ENCODE measurements at regions of chrX and their contacts with region 1.

Region 1: DNA sequence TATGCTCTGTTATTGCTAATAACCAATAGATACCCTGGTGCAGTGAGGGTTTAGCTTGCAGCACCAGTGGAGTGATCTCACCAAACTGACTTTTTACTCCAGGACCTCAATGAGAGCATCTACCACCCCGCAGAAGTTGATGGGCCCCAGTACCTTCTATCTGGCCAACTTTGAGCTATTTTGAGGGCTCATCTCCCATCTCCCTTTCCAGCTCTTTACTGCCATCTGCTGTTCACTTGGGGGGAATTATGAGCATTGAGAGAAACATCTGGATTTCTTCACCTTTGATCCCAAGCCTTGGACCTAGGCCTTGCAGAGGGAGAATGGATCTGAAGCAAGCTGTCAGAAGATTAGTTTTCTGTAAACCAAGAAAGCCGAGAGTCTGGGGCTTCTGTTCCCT is 143.6 kb downstream of the TMEM164 start:
- DNase-seq: peak; percentile 75

Region 2: DNA sequence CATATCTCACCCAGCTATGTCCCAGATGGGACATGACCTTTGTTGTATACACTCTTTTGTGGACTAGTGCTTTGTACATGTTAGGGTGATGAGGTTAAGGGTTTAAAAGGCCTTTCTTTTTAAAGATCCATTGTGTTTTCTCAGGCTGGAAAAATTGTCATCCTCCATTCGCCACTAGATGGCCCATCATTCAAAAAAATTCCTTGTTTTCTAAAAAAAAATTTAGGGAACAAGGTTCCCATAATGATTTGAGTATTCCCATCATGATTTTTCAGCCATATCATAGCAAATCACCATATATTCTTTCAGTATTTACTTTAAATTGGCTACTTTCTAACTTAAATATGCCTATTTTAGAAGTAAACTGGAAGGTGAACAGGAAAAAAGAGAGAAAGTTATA is 235.5 kb before region 1 on chrX:
- CTCF ChIA-PET with region 1: interaction called, 25 read pairs
- POLR2A ChIA-PET with region 1: no interaction called
- DNase-seq: no peak

Region 3: GRCh38 chrX:110133735-110134370 is 12.7 kb before region 1 on chrX:
- CTCF ChIA-PET with region 1: interaction called, 15 read pairs
- POLR2A ChIA-PET with region 1: no interaction called
- DNase-seq: no peak

Region 4: GRCh38 chrX:110226931-110227330 is 80.4 kb after region 1 on chrX:
- CTCF ChIA-PET with region 1: no interaction called
- POLR2A ChIA-PET with region 1: no interaction called
- DNase-seq: no peak

Region 5: DNA sequence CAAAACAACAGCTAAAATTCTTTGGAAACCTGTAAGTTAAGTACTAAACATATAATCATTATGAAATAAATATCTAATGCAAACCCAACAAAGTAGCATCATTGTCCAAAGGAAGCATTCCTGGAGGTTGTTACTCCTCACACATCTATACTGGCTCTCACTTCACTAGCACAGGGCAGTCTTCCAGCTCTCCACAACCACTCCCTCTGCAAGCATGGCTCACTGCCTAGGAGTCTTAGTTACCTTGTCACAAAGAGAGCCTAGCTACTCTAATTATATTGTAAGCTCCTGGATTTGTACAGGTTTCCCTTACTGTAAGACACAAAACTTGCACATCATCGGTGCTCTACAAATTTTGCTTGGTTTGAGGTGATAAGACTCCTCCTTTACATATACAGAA is 95.3 kb after region 1 on chrX:
- CTCF ChIA-PET with region 1: no interaction called
- POLR2A ChIA-PET with region 1: no interaction called
- DNase-seq: no peak

Region 6: DNA sequence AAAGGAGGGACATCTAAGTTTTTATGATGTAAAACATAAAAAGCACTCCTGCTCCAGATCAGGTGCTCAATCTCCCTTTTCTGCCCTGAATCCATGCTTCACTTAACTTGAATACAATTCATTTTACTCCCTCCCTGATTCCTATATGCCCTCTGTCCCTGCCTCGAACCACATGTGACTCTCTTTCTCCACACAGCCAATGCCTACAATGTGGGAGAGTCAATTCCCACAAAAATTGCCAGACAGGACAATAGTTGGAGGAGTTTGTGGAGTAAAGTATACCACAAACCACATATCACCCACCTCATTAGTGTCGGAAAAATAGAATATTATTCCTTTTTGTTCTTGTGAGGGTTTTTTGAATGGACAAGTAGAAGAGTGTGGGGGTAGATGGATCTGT is 161.7 kb after region 1 on chrX:
- CTCF ChIA-PET with region 1: no interaction called
- POLR2A ChIA-PET with region 1: no interaction called
- DNase-seq: no peak

Region 7: GRCh38 chrX:110407910-110408545 is 261.5 kb after region 1 on chrX:
- CTCF ChIA-PET with region 1: interaction called, 40 read pairs
- POLR2A ChIA-PET with region 1: no interaction called
- DNase-seq: peak; percentile 77

Region 8: GRCh38 chrX:110412971-110413721 is 266.6 kb after region 1 on chrX:
- CTCF ChIA-PET with region 1: interaction called, 40 read pairs
- POLR2A ChIA-PET with region 1: interaction called, 3 read pairs
- DNase-seq: peak; percentile 93